ENCODE measurements at regions of chr10 and their contacts with region 1.

Region 1: DNA sequence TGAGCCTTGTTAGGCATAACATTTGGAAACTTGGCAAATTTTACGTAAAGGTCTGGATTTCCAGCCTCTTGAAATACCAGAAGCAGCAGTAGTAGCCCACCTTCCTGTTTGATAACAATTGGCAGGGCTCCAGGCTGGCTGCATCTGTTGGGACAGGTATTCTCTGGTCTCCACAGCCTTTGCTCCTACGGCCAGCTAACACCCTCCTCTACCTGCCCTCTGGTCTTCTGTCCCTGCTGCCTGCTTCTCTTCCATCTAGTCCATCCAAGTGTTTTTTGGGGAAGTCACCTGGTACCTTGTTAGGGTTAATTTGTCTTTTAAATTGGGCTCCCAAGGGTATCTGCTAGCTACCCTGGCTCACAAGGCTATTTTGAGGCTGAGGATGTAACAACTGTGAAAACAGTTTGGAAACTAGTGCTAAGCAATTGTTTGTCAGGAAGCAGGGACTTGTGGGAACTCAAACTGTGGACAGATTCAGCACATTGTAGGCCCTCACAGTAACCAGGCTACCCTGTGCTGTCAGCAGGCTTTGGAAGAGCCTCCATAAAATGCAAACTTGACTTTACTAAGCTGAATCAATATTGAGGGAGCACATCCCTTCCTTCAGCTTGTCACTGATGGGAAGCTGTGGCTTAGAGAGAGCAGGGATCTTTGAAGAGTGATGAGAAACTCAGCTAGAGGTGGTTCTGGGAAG is 8.5 kb downstream of the RPS24 start:
- DNase-seq: peak; percentile 31

Region 2: DNA sequence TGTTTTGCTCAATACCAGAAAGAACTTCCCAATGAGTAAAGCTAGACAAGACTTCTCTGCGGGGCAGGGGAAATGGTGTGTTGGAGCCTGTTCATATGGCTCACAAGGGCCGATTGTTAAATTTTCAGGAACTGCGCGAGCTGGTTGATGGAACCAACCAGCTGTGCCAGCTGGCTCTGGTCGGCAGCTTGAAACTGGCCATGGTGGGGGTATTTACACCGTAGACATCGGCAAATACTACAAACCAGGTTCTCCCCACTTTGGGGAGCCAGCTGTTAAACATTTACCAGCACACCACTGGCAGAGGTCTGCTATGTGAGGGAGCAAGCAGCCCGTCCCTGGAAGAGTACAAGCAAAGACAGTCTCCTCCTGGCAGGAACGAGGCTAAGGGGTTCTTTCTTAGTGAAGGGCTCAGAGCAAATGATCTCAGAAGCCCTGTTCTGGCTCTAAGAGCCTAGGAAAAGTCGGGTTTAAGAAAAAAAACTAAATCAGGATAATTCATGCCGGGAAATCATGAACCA is 1017.7 kb after region 1 on chr10:
- intact Hi-C with region 1: loop called in 1 of 2 experiments (anchors 5 kb)
- DNase-seq: peak; percentile 32